OCI-LY7 (cell line): ENCODE measurements at regions of chr1 and their contacts with region 1.

Region 1: GRCh38 chr1:211323156-211324063 is 3.2 kb upstream of the TRAF5 start:
- DNase-seq: peak; percentile 79
- H3K4me3 ChIP-seq: no peak overlapping the region
- H3K27ac ChIP-seq: no peak overlapping the region
- H3K4me1 ChIP-seq: peaks cover 18% of the 10 kb centered on the region
- CTCF ChIP-seq: peak; percentile 97

Region 2: GRCh38 chr1:211258756-211259637 is 64.4 kb before region 1 on chr1 and contains the start of gene RCOR3:
- CTCF ChIA-PET with region 1: no interaction called
- POLR2A ChIA-PET with region 1: interaction called, 4 read pairs
- intact Hi-C with region 1: loop called (anchors 2 kb)
- DNase-seq: peak; percentile 92
- H3K4me3 ChIP-seq: peak within 1 kb of the TSS; percentile 87
- H3K27ac ChIP-seq: peak within 1 kb of the TSS; percentile 96
- H3K4me1 ChIP-seq: peaks cover 16% of the 10 kb centered on the region
- CTCF ChIP-seq: peak; percentile 67
- total RNA-seq, gene RCOR3: 32.3 and 34.8 TPM in 2 replicates

Region 3: DNA sequence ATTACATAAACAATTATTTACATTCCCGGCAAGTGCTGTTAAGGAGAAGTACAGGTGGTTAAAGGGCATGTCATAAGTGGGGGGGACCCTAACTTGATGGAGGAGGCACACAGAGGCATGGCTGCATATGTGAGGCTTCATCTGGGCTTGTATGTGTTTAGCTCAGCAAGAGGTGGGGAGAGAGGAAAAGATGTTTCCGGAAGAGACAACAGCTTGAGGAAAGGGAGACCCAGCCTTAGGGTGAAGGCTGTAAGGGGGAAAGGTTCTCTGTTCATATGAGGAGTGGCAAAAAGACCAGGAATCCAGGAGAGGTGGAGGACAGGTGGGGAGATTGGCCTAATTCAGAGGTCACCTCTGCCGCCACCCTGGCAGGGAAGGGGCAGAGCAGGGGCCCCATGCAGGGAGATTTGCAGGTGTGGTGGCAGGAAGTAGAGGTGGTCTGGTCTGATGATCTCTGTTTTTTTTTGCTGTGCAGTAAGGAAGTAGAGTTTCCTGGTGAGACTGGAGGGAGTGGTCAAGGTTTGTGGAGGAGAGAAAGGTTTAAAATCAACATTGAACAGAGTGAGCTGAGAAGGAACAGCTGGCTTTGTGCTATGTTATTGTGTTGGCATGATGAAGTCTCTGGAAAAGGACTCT is 12.2 kb after region 1 on chr1:
- CTCF ChIA-PET with region 1: interaction called, 38 read pairs
- POLR2A ChIA-PET with region 1: interaction called, 39 read pairs
- intact Hi-C with region 1: no loop called
- DNase-seq: peak; percentile 84
- H3K4me3 ChIP-seq: peak overlapping the region; percentile 56
- H3K27ac ChIP-seq: peak overlapping the region; percentile 87
- H3K4me1 ChIP-seq: peaks cover 90% of the 10 kb centered on the region
- CTCF ChIP-seq: no peak

Region 4: GRCh38 chr1:211382714-211383480 is 59.5 kb after region 1 on chr1:
- CTCF ChIA-PET with region 1: no interaction called
- POLR2A ChIA-PET with region 1: interaction called, 21 read pairs
- intact Hi-C with region 1: loop called (anchors 2 kb)
- DNase-seq: peak; percentile 83
- H3K4me3 ChIP-seq: peak overlapping the region; percentile 67
- H3K27ac ChIP-seq: no peak overlapping the region
- H3K4me1 ChIP-seq: peaks cover 6% of the 10 kb centered on the region
- CTCF ChIP-seq: no peak

Region 5: GRCh38 chr1:211514030-211514754 is 190.8 kb after region 1 on chr1:
- CTCF ChIA-PET with region 1: interaction called, 4 read pairs
- POLR2A ChIA-PET with region 1: interaction called, 6 read pairs
- intact Hi-C with region 1: loop called (anchors 1 kb)
- DNase-seq: peak; percentile 84
- H3K4me3 ChIP-seq: peak overlapping the region; percentile 7
- H3K27ac ChIP-seq: no peak overlapping the region
- H3K4me1 ChIP-seq: peaks cover 45% of the 10 kb centered on the region
- CTCF ChIP-seq: peak; percentile 86

Region 6: GRCh38 chr1:211654838-211655787 is 331.7 kb after region 1 on chr1:
- CTCF ChIA-PET with region 1: no interaction called
- POLR2A ChIA-PET with region 1: no interaction called
- intact Hi-C with region 1: loop called (anchors 1 kb)
- DNase-seq: peak; percentile 80
- H3K4me3 ChIP-seq: no peak overlapping the region
- H3K27ac ChIP-seq: no peak overlapping the region
- H3K4me1 ChIP-seq: no peaks in the 10 kb centered on the region
- CTCF ChIP-seq: peak; percentile 97

Region 7: DNA sequence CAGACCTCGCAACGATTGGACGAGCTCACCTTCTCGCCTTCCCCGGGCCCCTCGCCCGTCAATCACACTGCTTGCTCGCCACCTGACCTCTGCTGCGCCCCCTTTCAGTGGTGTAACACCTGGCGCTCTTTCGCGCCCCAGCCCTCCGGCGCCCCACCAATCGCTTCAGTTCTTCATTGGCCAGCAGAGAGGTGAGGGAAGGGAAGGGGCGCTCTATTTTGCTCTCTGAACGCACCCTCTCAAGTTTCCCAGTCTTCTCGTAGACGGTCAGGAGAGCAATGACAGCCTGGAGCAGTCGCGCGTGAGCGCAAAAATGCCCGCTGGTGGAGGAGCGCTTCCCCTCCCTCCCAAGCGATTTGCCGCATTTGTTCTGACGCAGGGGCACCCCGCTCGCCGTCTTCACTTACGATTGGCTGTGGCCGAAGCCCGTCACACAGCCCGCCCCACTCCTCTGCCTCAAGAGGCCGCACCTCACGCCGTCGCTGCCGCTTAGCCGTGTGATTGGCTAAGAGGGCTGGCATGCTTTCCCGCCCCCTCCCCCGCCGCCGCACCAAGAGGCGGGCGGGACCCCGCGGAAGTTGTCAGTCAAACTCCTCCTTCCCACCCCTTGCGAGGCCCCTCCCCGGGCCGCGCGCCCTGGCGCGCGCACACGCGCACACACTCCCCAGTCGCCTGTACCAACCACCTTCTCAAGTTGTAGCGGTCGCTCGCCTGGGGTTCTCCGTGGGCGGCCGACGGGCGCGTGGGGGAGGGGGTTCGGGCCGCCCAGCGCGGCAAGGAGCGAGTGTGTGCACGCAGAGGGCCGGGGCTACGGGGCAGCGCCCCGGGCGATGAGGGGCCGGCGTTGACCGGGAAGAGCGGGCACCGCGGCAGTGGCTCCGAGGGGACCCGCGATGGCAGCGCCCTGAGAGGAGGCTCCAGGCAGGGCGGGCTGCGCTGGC is 961.6 kb after region 1 on chr1 and contains the start of gene PPP2R5A:
- CTCF ChIA-PET with region 1: no interaction called
- POLR2A ChIA-PET with region 1: no interaction called
- intact Hi-C with region 1: loop called (anchors 10 kb)
- DNase-seq: peak; percentile 99
- H3K4me3 ChIP-seq: peak within 1 kb of the TSS; percentile 80
- H3K27ac ChIP-seq: peak within 1 kb of the TSS; percentile 81
- H3K4me1 ChIP-seq: peaks cover 29% of the 10 kb centered on the region
- CTCF ChIP-seq: peak; percentile 73
- total RNA-seq, gene PPP2R5A: 26.8 and 28.0 TPM in 2 replicates